Spleen (tissue), 13 donors: ENCODE measurements at regions of chr11 and their contacts with region 1.

Region 1: DNA sequence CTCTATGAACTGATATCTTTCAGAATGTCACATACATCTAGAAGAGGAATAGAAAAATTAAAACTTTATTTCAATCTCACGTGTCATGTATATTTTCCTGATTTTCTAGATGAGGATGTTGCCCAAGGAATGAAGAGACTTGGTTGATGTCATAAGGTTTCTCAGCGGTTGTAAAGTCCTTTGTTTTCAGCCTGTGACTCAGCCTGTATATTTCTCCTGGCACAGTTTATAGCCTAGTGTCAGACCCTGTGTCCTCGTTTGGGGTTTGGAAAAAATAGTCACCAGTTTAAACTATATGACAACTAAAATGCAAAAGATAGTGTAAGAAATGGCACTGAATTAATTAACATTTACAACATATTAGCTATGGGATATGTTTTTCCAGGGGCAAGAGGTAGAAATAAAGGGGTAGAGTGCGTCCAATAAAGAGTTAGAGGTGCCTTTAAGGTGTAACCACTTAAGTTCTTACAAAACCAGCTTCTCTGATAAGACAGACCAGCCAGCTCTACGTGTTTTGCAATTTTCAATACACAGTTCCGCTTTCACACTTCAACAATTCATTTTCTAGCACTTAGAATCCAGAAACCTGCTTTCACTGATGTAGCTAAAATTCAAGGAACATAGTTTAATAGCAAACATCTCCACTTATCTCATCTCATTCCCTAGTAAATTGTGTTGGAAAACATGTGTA is 1432.6 kb upstream of the TENM4 start:
- DNase-seq: no peak
- H3K4me3 ChIP-seq: no peak overlapping the region
- H3K27ac ChIP-seq: no peak overlapping the region
- H3K4me1 ChIP-seq: no peaks in the 10 kb centered on the region
- H3K27me3 ChIP-seq: no peaks in the 10 kb centered on the region
- CTCF ChIP-seq: no peak
- POLR2A ChIP-seq: no peak

Region 2: GRCh38 chr11:80937842-80938241 is 64.4 kb after region 1 on chr11:
- intact Hi-C with region 1: loop called (anchors 10 kb)
- DNase-seq: no peak
- H3K4me3 ChIP-seq: no peak overlapping the region
- H3K27ac ChIP-seq: no peak overlapping the region
- H3K4me1 ChIP-seq: no peaks in the 10 kb centered on the region
- H3K27me3 ChIP-seq: no peaks in the 10 kb centered on the region
- CTCF ChIP-seq: no peak
- POLR2A ChIP-seq: no peak